Activated CD4-positive, alpha-beta T cell treated with anti-CD3 and anti-CD28 coated beads, Interleukin-2, amount 10 ng/mL, durations not matched to agents 24 days and 14 days (primary cell): ENCODE measurements at regions of chr1 and their contacts with region 1.

Region 1: GRCh38 chr1:66399888-66400529 is 133.9 kb upstream of the SGIP1 start:
- DNase-seq: no peak
- H3K4me3 Mint-ChIP-seq: peak overlapping the region; percentile 72
- H3K27ac Mint-ChIP-seq: peak overlapping the region; percentile 90
- H3K4me1 Mint-ChIP-seq: peaks cover 43% of the 10 kb centered on the region
- H3K27me3 Mint-ChIP-seq: no peaks in the 10 kb centered on the region

Region 2: DNA sequence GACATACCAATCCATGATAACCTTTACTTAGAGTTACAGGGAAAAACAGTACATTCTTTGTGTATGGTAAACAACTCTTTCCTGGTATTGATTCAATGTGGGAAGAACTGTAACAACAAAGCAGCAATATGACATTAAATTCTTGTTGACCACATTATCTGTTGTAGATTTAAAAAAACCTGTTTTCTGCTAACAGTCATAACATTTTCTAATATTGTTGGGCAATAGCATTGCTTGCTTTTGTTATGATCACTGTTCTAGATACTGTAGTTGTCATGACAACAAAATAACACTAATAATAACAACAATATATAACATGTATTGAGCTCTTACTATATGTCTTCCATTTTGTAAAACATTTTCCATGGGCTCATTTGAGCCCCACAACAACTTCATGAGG is 553.1 kb before region 1 on chr1:
- intact Hi-C with region 1: no loop called
- DNase-seq: no peak
- H3K4me3 Mint-ChIP-seq: no peak overlapping the region
- H3K27ac Mint-ChIP-seq: no peak overlapping the region
- H3K4me1 Mint-ChIP-seq: no peaks in the 10 kb centered on the region
- H3K27me3 Mint-ChIP-seq: peaks cover 4% of the 10 kb centered on the region

Region 3: GRCh38 chr1:66436378-66437145 is 36.6 kb after region 1 on chr1:
- intact Hi-C with region 1: loop called (anchors 1 kb)
- DNase-seq: peak; percentile 80
- H3K4me3 Mint-ChIP-seq: no peak overlapping the region
- H3K27ac Mint-ChIP-seq: peak overlapping the region; percentile 7
- H3K4me1 Mint-ChIP-seq: peaks cover 33% of the 10 kb centered on the region
- H3K27me3 Mint-ChIP-seq: no peaks in the 10 kb centered on the region